CD14-positive monocyte (primary cell): ENCODE measurements at regions of chr11 and their contacts with region 1.

Region 1: DNA sequence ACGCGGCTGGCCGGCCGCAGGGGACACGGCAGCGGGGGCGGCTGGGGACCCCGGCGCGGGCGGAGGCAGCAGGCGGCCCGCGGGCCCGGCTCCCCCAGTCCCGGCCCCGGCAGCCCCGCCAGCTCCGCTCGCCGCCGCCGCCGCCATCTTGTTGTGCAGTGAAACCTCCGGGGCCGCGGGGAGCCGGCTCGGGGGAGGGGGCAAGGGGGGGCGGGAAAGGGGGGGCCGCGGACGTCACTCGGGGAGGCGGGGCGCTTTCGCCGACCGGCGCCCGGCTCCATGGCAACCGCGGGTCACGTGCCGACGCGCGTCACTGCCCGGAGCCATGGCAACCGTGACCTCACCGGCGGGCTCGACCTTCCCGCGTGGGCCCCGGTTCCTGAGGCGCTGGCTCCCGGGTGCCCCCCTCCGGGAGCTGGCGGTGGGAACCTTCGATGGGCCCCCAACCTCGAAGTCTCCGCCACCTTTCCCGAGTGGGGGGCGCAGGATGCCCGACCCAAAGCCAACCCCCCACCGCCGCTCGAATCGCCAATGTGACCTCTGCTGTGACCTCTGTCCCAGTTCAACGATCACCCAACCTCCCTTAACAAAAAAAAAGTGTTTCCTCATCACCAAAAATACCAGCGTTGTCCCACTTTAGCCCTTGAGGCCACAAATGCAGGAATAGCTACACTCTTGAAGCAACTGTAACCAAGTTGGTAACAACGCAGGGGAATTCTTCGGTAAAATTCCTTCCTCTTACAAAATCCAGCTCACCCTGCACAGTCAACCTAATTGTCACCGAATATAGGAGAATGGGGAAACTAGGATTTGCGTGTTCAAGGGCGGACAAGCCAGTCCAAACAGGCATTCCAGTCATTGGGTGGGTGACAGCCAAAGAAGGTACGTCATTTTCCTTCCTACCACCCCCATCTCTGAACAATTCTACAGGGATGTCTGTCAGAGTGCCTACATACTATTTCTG is at the start of gene SIK3:
- DNase-seq: peak; percentile 92 to 95 (median 93)
- H3K4me3 ChIP-seq: peak within 1 kb of the TSS; percentile 85 to 97 (median 89)
- H3K4me3 Mint-ChIP-seq: peak within 1 kb of the TSS; percentile 99 to 100
- H3K27ac ChIP-seq: peak within 1 kb of the TSS; percentile 82 to 97
- H3K27ac Mint-ChIP-seq: peak within 1 kb of the TSS; percentile 98 to 100 (median 99)
- H3K4me1 ChIP-seq: peaks cover 38 to 40% of the 10 kb centered on the region in 2 donors
- H3K4me1 Mint-ChIP-seq: peaks cover 45% of the 10 kb centered on the region
- H3K27me3 ChIP-seq: no peaks in the 10 kb centered on the region
- H3K27me3 Mint-ChIP-seq: no peaks in the 10 kb centered on the region
- CTCF ChIP-seq: peak; percentile 45
- polyA plus RNA-seq, gene SIK3: 18.3 to 142 (median 20.0) TPM

Region 2: DNA sequence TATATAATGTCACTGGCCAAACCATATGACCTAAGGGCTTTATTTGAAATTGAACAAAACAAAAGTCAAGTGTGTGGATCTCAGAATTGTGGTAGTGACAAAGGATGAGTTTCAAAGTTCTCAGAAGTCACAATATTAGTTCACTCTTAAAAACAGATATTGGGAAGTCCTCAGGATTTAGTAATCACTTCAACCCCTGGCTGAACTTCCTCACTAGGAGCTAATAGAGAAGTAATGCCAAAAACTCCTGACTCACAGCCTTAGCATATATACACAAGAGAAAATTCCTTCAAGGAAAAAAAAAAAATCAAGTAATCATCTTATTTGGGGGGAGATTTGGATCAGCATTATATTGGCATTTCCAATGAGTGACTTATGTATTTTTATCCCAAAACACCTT is 185.6 kb before region 1 on chr11:
- intact Hi-C with region 1: loop called in 1 of 2 experiments (anchors 5 kb)
- DNase-seq: peak; percentile 72 to 93 (median 92)
- H3K4me3 ChIP-seq: peak overlapping the region in 1 of 3 experiments; percentile 52
- H3K4me3 Mint-ChIP-seq: peak overlapping the region in 1 of 2 donors; percentile 67
- H3K27ac ChIP-seq: peak overlapping the region in 1 of 2 donors; percentile 75
- H3K27ac Mint-ChIP-seq: peak overlapping the region; percentile 88 to 94 (median 91)
- H3K4me1 ChIP-seq: peaks cover 51 to 62% of the 10 kb centered on the region in 2 donors
- H3K4me1 Mint-ChIP-seq: peaks cover 59% of the 10 kb centered on the region
- H3K27me3 ChIP-seq: no peaks in the 10 kb centered on the region
- H3K27me3 Mint-ChIP-seq: no peaks in the 10 kb centered on the region
- CTCF ChIP-seq: no peak

Region 3: DNA sequence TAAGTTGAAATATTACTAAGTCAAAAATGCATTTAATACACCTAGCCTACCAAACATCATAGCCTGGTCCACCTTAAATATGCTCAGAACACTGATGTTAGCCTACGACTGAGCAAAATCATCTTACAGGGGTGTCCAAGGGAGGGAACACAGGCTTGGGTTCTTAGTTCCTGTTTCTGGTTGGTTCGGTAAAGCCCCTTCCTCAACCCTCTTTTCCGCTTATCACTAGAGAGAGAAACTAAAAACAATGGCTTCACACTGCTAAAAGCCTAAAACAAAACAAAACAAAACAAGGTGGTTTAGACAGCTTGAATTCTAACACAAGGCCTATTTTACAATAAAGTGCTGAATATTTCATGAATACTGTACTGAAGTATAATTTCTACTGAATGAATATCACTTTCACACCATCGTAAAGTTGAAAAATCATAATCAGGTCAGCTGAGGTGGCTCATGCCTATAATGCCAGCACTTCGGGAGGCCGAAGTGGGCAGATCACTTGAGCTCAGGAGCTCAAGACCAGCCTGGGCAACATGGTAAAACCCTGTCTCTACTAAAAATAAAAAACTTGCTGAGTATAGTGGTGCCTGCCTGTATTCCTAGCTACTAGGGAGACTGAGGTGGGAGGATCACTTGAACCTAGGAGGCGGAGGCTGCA is 118.3 kb before region 1 on chr11:
- intact Hi-C with region 1: loop called in 1 of 2 experiments (anchors 5 kb)
- DNase-seq: peak; percentile 60 to 81 (median 78)
- H3K4me3 ChIP-seq: peak overlapping the region in 2 of 3 experiments; percentile 43 to 54
- H3K4me3 Mint-ChIP-seq: peak overlapping the region; percentile 28 to 71
- H3K27ac ChIP-seq: peak overlapping the region; percentile 89
- H3K27ac Mint-ChIP-seq: peak overlapping the region; percentile 92 to 97 (median 95)
- H3K4me1 ChIP-seq: peaks cover 68 to 79% of the 10 kb centered on the region in 2 donors
- H3K4me1 Mint-ChIP-seq: peaks cover 62% of the 10 kb centered on the region
- H3K27me3 ChIP-seq: no peaks in the 10 kb centered on the region
- H3K27me3 Mint-ChIP-seq: peaks cover 0 to 2% (median 0%) of the 10 kb centered on the region in 3 donors
- CTCF ChIP-seq: no peak

Region 4: GRCh38 chr11:117037279-117037974 is 61.1 kb before region 1 on chr11:
- intact Hi-C with region 1: no loop called
- DNase-seq: no peak
- H3K4me3 ChIP-seq: no peak overlapping the region
- H3K4me3 Mint-ChIP-seq: no peak overlapping the region
- H3K27ac ChIP-seq: peak overlapping the region in 1 of 2 donors; percentile 56
- H3K27ac Mint-ChIP-seq: peak overlapping the region in 4 of 7 donors; percentile 13 to 43 (median 22)
- H3K4me1 ChIP-seq: no peaks in the 10 kb centered on the region
- H3K4me1 Mint-ChIP-seq: peaks cover 37% of the 10 kb centered on the region
- H3K27me3 ChIP-seq: no peaks in the 10 kb centered on the region
- H3K27me3 Mint-ChIP-seq: peaks cover 0 to 2% (median 0%) of the 10 kb centered on the region in 3 donors
- CTCF ChIP-seq: no peak

Region 5: GRCh38 chr11:117554601-117555333 is 456.2 kb after region 1 on chr11:
- intact Hi-C with region 1: no loop called
- DNase-seq: no peak
- H3K4me3 ChIP-seq: no peak overlapping the region
- H3K4me3 Mint-ChIP-seq: no peak overlapping the region
- H3K27ac ChIP-seq: no peak overlapping the region
- H3K27ac Mint-ChIP-seq: peak overlapping the region in 2 of 7 donors; percentile 44 to 66
- H3K4me1 ChIP-seq: no peaks in the 10 kb centered on the region
- H3K4me1 Mint-ChIP-seq: no peaks in the 10 kb centered on the region
- H3K27me3 ChIP-seq: no peaks in the 10 kb centered on the region
- H3K27me3 Mint-ChIP-seq: peaks cover 7 to 15% (median 10%) of the 10 kb centered on the region in 3 donors
- CTCF ChIP-seq: no peak